Left colon (tissue), 2 donors: ENCODE measurements at regions of chr3 and their contacts with region 1.

Region 1: DNA sequence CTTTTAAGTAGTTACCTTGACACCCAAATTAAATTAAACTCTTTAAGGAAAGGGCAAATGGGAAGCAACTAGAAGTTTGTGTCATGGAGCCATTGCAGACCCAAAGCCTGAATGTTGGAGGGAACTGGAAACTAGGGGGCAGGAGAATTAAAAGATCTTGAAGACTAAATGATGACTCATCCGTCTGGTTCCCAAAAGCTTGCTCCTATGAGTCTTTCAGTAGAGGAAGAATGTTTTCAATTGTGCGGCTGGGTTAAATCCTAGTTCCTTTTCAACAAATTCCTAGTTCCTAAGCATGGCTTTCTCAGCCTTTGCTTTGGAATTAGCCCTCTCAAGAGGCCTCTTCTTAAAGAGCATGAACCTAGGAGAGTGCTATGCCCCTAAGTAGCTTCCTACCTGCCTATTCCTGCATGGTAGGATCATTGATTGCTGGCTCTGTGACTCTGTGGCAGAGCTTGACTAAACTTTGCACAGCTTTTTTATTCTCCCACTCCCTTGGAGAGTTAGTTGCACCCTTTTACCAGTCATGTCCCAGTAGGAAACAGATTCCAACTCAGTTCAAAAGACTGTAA is 17.7 kb downstream of the CLEC3B start:
- DNase-seq: no peak
- ATAC-seq: no peak

Region 2: DNA sequence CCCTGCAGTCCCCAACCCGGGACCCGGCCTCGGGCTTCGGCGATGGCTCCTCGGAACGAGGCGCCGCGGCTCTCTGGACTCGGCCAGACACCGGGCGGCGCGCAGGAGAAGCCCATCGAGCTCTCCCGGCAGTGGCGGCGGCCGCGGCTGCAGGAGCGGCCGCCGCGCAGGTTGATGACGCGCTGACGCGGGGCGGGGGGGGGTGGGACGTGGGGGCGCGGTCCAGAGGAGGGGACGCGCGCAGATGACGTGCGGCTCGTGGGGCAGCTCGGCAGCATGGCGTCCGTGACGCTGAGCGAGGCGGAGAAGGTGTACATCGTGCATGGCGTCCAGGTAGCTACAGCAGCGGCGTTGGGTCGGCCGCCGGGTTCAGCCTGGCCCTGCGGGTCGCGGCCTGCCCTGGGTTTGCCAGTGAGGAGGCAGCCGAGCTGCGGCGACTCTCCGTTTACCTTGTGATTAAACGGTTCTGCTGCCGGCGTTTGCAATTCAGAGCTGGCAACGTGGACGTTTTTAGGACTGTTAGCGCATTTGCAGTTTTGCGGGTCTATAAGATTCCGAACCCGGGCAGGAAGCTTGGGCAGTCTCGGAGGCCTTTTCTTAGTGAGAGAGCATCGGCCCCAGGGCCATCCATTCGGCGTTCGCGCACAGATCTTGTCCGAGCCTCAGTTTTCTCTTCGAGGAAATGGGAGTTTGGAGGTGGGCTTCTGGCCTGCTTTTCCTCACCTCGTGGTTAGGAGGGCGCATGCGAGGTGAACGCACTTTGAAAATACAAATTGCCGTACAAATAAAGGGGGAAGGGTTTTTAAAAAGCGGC is 67.6 kb before region 1 on chr3 and contains the starts of genes EXOSC7 and ZDHHC3:
- intact Hi-C with region 1: no loop called
- DNase-seq: peak; percentile 86 to 92
- ATAC-seq: peak; percentile 75
- total RNA-seq, gene EXOSC7: 18.9 to 22.2 TPM
- total RNA-seq, gene ZDHHC3: 152 to 171 TPM

Region 3: DNA sequence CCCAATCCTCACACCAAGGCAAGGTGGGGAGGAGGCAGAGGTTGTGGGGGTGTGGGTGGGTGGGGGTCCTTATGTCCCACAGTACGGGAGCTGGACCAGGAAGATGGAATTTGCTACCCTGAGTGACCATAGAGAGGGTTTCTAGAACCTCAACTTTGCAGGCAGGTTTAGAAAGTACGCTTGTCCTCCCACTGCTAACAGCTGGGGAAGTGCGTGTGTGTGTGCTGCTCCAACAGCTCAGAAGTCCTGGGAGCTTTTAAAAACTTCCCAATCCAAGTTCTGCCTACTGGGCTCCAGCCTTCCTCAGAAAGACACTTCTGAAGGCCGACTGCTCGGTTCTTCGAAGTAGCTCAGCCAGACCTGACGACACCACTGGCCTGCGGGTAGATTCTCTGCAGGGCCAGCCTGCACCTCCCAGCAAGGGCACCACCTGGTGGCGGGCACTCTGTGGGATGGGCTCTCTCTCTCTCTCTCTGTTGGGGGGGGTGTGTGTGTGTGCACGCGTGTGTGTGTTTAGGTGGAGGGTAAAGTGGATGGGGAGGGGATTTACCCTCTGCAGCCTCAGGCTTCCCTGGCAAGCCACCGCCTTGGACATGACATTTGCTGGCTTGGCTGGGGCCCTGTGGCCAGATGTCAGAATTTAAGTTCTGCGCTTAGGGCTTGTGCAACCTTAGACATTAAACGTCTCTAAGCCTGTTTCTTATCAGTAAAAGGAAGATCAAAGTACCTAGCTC is 166.7 kb after region 1 on chr3:
- intact Hi-C with region 1: loop called in 1 of 2 experiments (anchors 5 kb)
- DNase-seq: peak; percentile 84 to 93
- ATAC-seq: peak; percentile 92

Region 4: DNA sequence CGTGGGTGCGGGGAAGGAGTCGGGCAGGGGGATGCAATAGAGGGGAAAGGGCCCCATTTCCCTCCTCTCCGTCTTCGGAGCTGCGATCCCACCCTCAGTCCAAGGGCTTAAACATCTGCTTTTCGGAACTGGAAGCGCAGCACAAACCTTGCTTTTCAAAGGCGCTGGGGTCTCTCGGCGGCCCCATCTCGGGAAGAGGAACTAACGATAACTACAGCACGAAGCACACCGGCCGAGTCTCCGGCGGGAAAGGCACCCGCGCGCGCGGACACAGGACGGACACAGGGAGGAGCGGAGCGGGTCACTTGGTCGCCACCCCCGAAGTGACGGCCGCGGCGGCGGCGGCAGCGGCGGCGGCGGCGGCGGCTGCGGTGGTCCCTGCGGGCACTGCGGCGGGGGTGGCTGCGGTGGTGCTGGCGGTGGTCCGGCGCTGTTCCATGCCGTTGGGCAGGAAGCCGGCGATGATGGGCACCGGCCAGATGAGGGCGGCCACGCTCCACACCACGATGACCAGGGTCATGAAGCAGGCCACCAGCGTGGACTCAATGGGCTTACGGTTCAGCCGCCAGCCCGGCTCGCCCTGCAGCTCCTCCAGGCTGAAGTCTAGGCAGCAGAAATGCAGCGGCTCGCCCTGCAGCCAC is 181.1 kb after region 1 on chr3:
- intact Hi-C with region 1: loop called in 1 of 2 experiments (anchors 10 kb)
- DNase-seq: peak; percentile 71 to 76
- ATAC-seq: peak; percentile 75

Region 5: GRCh38 chr3:45499529-45499928 is 455.7 kb after region 1 on chr3:
- intact Hi-C with region 1: loop called (anchors 5 to 10 kb)
- DNase-seq: no peak
- ATAC-seq: peak; percentile 47